ENCODE measurements at regions of chr3 and their contacts with region 1.

Region 1: DNA sequence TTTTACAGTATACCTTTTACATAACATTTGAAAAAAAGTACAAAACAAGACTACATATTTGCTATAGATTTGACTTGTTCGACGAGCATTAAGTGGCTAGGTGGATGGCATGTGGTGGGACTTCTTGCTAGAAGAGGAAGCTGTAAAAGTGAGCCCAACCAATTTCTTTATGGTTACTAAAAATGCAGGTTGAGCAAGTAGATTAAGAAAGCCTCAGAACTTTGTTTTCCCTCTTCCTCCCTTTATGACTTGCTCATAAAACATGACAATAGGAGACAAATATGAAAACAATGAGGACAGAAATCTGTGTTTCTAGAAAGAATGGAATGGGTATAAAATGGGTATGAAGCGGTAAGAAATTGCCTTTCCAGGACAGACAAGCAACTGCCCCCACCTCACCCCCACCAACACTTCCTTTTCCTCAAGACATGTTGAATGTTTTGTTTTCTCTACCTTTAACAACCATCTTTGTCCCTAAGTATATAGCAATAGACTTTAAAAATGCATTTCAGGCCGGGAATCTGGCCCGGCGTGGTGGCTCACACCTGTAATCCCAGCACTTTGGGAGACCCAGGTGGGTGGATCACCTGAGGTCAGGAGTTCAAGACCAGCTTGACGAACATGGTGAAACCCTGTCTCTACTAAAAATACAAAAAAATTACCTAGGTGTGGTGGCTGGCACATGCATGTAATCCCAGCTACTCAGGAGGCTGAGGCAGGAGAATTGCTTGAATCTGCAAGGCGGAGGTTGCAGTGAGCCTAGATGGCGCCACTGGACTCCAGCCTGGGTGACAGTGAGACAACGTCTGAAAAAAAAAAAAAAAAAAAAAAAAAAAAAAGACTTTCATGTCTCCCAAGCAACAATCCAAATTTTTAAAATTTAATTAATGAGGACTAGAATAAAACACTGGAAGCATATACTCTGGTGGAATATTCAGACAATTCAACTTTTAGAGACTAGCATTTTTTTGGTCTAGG is 49.7 kb upstream of the CCR4 start:
- DNase-seq: peak; percentile 66
- H3K4me3 Mint-ChIP-seq: peak overlapping the region; percentile 43
- H3K27ac Mint-ChIP-seq: no peak overlapping the region
- H3K4me1 Mint-ChIP-seq: peaks cover 2% of the 10 kb centered on the region
- H3K27me3 Mint-ChIP-seq: peaks cover 3% of the 10 kb centered on the region

Region 2: DNA sequence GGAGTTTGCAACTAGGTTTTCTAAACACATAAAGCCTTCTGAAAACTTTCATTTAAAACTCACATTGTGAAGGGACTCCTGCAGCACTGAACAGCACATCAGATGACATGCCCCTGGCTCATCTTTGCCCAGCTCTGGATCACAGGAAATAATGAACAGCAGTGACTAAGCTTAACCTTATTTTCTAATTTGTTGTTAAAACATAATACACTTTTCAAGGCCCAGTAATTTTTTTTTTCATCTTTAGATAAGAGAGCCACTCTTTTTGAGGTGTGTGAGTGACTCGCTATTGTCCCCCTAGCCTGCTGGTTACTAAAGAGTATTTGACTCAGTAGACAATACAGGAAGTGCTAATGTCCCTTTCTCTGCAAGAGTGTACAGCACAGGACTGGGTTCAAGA is 1124.6 kb before region 1 on chr3:
- CTCF ChIA-PET with region 1: no interaction called
- intact Hi-C with region 1: no loop called
- DNase-seq: no peak
- H3K4me3 Mint-ChIP-seq: no peak overlapping the region
- H3K27ac Mint-ChIP-seq: no peak overlapping the region
- H3K4me1 Mint-ChIP-seq: peaks cover 16% of the 10 kb centered on the region
- H3K27me3 Mint-ChIP-seq: peaks cover 6% of the 10 kb centered on the region

Region 3: GRCh38 chr3:32641356-32641755 is 260.4 kb before region 1 on chr3:
- CTCF ChIA-PET with region 1: no interaction called
- intact Hi-C with region 1: no loop called
- DNase-seq: no peak
- H3K4me3 Mint-ChIP-seq: no peak overlapping the region
- H3K27ac Mint-ChIP-seq: no peak overlapping the region
- H3K4me1 Mint-ChIP-seq: no peaks in the 10 kb centered on the region
- H3K27me3 Mint-ChIP-seq: no peaks in the 10 kb centered on the region

Region 4: DNA sequence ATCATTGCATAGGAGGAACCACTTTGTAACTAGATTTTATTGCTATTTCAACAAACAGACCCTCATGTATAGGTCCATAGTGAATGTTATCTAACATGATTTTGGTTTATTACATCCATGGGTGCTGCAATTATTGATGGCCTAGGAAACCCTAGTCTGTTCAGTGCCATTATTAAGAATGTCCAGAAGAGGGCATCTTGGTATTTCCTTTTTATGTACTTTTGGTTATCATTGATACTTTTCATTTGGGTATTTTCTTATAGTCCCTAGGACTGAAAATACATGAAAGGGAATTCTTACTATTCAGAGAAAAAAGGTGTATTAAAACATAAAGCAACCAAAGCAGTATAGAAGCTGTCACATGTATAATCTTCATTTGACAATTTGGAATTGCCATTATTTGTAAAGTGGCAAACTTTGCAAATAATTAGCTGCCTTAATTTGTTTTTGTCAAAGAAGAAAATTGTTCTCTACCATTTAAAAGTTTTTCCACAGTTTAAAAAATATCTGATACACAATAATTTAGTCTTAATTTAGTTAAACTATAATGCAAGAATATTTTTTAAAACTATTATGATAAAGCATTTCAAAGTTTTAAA is 168.0 kb before region 1 on chr3:
- CTCF ChIA-PET with region 1: interaction called, 9 read pairs
- intact Hi-C with region 1: loop called (anchors 1 kb)
- DNase-seq: no peak
- H3K4me3 Mint-ChIP-seq: no peak overlapping the region
- H3K27ac Mint-ChIP-seq: no peak overlapping the region
- H3K4me1 Mint-ChIP-seq: no peaks in the 10 kb centered on the region
- H3K27me3 Mint-ChIP-seq: no peaks in the 10 kb centered on the region

Region 5: DNA sequence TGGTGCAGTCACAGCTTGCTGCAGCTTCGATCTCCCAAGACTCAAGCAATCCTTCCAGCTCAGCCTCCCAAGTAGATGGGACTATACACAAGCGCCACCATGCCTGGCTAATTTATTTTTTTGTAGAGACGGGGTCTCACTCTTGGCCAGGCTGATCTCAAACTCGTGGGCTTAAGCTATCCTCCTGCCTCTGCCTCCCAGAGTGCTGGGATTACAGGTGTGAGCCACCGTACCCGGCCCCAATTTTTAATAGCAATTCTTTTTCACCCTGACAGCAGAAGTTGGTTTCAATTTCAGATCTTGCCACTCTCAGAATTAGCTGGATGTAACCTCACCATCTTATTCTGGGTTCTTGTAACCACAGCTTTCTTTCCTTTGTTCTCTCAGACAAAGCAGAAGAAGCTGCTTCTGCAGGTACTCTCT is 19.1 kb before region 1 on chr3:
- CTCF ChIA-PET with region 1: interaction called, 10 read pairs
- intact Hi-C with region 1: no loop called
- DNase-seq: peak; percentile 30
- H3K4me3 Mint-ChIP-seq: no peak overlapping the region
- H3K27ac Mint-ChIP-seq: no peak overlapping the region
- H3K4me1 Mint-ChIP-seq: peaks cover 12% of the 10 kb centered on the region
- H3K27me3 Mint-ChIP-seq: peaks cover 15% of the 10 kb centered on the region

Region 6: GRCh38 chr3:32973982-32974381 is 72.3 kb after region 1 on chr3:
- CTCF ChIA-PET with region 1: no interaction called
- intact Hi-C with region 1: no loop called
- DNase-seq: peak; percentile 49
- H3K4me3 Mint-ChIP-seq: no peak overlapping the region
- H3K27ac Mint-ChIP-seq: no peak overlapping the region
- H3K4me1 Mint-ChIP-seq: peaks cover 10% of the 10 kb centered on the region
- H3K27me3 Mint-ChIP-seq: no peaks in the 10 kb centered on the region

Region 7: DNA sequence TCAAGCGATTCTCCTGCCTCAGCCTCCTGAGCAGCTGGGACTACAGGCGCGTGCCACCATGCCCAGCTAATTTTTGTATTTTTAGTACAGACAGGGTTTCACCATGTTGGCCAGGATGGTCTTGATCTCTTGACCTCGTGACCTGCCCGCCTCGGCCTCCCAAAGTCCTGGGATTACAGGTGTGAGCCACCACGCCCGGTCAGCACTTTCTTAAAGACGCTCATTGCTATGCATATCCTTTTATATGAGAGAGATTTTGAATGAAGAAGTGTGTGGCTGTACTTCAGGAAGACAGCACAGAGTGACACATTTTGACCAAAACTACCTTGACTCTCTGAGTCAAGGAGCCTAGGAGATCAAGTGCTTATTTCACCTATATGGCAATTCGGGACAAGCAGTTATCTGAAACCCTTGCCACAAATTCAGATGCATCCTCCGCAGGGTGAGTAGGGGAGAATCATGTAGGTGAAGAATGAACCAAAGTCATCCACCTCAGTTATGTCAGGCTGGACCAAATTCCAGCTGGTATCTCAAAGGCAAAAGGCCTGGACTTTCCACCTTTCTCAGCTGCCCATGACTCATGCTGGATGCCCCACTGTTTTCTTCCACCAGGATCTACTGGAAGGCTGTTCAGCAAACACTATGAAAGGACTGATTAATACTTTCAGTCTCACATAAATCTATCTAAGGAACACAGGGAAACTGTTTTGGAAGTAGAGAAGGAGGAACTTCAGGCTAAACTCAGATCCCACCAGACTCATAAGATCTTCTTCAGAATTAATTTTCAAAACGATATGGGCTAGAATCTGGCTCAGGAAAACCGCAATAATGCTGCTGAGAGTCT is 285.0 kb after region 1 on chr3:
- CTCF ChIA-PET with region 1: no interaction called
- intact Hi-C with region 1: no loop called
- DNase-seq: no peak
- H3K4me3 Mint-ChIP-seq: no peak overlapping the region
- H3K27ac Mint-ChIP-seq: no peak overlapping the region
- H3K4me1 Mint-ChIP-seq: no peaks in the 10 kb centered on the region
- H3K27me3 Mint-ChIP-seq: peaks cover 10% of the 10 kb centered on the region